IMR-90 (cell line): ENCODE measurements at regions of chr1 and their contacts with region 1.

Region 1: GRCh38 chr1:101238681-101239094 is 1.9 kb downstream of the S1PR1 start:
- DNase-seq: peak; percentile 91
- ATAC-seq: peak; percentile 69
- H3K4me3 ChIP-seq: no peak overlapping the region; the same call in 1 of the 2 replicates
- H3K27ac ChIP-seq: no peak overlapping the region
- H3K4me1 ChIP-seq: no peaks in the 10 kb centered on the region
- H3K27me3 ChIP-seq: no peaks in the 10 kb centered on the region
- CTCF ChIP-seq: peak; percentile 93
- POLR2A ChIP-seq: no peak
- RAD21 ChIP-seq: peak; percentile 90

Region 2: GRCh38 chr1:100921109-100921706 is 317.5 kb before region 1 on chr1:
- CTCF ChIA-PET with region 1: interaction called, 7 read pairs
- POLR2A ChIA-PET with region 1: no interaction called
- dilution Hi-C with region 1: no loop called
- in situ Hi-C with region 1: loop called (anchors 5 kb)
- intact Hi-C with region 1: loop called (anchors 1 kb)
- DNase-seq: peak; percentile 65
- ATAC-seq: peak; percentile 62
- H3K4me3 ChIP-seq: no peak overlapping the region
- H3K27ac ChIP-seq: no peak overlapping the region
- H3K4me1 ChIP-seq: no peaks in the 10 kb centered on the region
- H3K27me3 ChIP-seq: no peaks in the 10 kb centered on the region
- CTCF ChIP-seq: peak; percentile 71
- POLR2A ChIP-seq: no peak
- RAD21 ChIP-seq: peak; percentile 77

Region 3: GRCh38 chr1:101004670-101005069 is 234.0 kb before region 1 on chr1:
- CTCF ChIA-PET with region 1: no interaction called
- POLR2A ChIA-PET with region 1: no interaction called
- dilution Hi-C with region 1: no loop called
- in situ Hi-C with region 1: no loop called
- intact Hi-C with region 1: loop called (anchors 5 kb)
- DNase-seq: peak; percentile 64
- ATAC-seq: peak; percentile 28; the same call in 1 of the 2 replicates
- H3K4me3 ChIP-seq: no peak overlapping the region
- H3K27ac ChIP-seq: peak overlapping the region; percentile 49; the same call in 1 of the 2 replicates
- H3K4me1 ChIP-seq: peaks cover 10% of the 10 kb centered on the region; the same call in 1 of the 2 replicates
- H3K27me3 ChIP-seq: no peaks in the 10 kb centered on the region
- CTCF ChIP-seq: no peak
- POLR2A ChIP-seq: no peak
- RAD21 ChIP-seq: no peak

Region 4: DNA sequence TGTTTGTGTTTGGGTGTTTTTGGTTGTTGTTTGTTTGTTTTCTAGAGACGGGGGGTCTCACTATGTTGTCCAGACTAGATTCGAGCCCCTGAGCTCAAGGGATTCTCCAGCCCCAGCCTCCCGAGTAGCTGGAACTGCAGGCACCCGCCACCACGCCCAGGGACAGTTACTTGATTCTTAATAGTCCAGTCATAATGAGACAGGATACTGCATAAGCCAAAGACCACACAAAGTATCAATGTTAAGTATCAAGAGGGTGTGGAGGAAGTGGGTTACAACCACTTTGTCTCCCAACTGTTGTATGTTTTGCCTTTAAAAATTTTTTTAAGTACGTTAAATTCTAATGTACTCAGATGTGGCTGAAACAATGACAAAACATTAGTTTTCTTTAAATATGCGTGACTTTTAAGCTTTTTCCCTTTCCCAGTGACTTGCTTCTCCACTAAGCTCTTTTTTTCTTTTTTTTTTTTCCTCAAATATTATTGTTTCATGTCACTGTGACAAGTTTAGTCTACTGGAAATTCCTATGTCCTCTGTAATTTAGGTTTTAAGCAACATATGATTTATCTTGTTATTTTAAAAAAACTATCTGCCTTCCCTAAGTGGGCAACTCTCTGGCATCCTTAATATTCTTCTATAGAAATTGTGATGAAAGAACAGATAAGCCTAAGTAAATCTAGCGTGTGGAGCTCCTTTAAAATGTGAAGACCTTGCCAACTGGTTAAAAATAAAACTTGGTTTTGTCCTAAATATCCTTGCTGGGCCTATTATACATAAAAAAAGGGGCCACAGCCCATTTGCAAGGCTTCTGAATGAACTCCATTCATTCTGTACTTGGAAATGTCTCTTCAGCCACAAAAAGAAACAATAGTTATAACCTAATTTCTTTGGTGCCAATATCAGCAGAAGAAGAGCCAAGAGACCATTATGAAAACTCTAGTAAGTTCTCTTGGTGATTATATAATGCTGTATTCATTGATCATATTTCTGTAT is 156.9 kb before region 1 on chr1:
- CTCF ChIA-PET with region 1: no interaction called
- POLR2A ChIA-PET with region 1: no interaction called
- dilution Hi-C with region 1: no loop called
- in situ Hi-C with region 1: no loop called
- intact Hi-C with region 1: loop called (anchors 5 kb)
- DNase-seq: no peak
- ATAC-seq: no peak
- H3K4me3 ChIP-seq: no peak overlapping the region
- H3K27ac ChIP-seq: no peak overlapping the region
- H3K4me1 ChIP-seq: no peaks in the 10 kb centered on the region
- H3K27me3 ChIP-seq: no peaks in the 10 kb centered on the region
- CTCF ChIP-seq: no peak
- POLR2A ChIP-seq: no peak
- RAD21 ChIP-seq: no peak

Region 5: DNA sequence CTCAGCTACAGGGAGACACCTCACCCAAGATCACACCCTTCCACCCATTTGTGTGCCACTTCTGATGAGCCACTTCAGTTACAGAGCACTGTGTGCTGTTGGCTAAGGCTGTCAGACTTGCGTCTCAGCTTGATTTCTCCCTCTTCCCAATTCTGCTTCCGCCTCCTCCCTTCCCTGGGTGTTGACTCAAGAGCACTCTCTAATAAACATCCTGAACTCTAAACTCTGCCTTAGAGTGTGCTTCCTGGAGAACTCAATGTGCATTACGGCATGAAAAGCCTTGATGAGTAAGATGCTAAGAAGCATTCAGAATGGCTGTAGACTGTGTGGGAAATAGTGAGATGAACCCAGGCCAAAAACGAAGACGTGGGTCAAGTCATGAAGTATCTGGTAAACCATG is 56.8 kb before region 1 on chr1:
- CTCF ChIA-PET with region 1: no interaction called
- POLR2A ChIA-PET with region 1: no interaction called
- dilution Hi-C with region 1: no loop called
- in situ Hi-C with region 1: no loop called
- intact Hi-C with region 1: loop called (anchors 5 kb)
- DNase-seq: peak; percentile 75
- ATAC-seq: peak; percentile 70
- H3K4me3 ChIP-seq: no peak overlapping the region
- H3K27ac ChIP-seq: no peak overlapping the region
- H3K4me1 ChIP-seq: peaks cover 10% of the 10 kb centered on the region
- H3K27me3 ChIP-seq: no peaks in the 10 kb centered on the region
- CTCF ChIP-seq: no peak
- POLR2A ChIP-seq: no peak
- RAD21 ChIP-seq: no peak

Region 6: GRCh38 chr1:101203820-101204540 is 34.7 kb before region 1 on chr1:
- CTCF ChIA-PET with region 1: no interaction called
- POLR2A ChIA-PET with region 1: no interaction called
- dilution Hi-C with region 1: no loop called
- in situ Hi-C with region 1: no loop called
- intact Hi-C with region 1: no loop called
- DNase-seq: peak; percentile 70
- ATAC-seq: no peak
- H3K4me3 ChIP-seq: no peak overlapping the region
- H3K27ac ChIP-seq: no peak overlapping the region
- H3K4me1 ChIP-seq: peaks cover 4% of the 10 kb centered on the region
- H3K27me3 ChIP-seq: no peaks in the 10 kb centered on the region
- CTCF ChIP-seq: no peak
- POLR2A ChIP-seq: no peak
- RAD21 ChIP-seq: no peak

Region 7: DNA sequence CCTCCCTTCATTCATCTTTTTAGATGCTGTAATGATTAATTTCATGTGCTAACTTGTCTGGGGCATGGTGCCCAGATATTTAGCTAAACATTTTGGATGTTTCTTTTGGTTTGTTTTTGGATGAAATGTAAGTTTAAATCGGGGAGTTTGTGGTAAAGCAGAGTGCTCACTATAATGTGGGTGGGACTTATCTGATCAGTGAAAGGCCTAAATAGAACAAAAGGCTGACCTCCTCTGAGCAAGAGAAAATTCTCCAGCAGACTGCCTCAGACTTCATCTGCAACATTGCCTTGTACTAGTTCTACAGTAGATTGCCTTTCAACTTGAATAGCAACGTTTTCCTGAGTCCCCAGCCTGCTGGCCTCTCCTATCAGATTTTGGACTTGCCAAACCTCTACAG is 181.7 kb after region 1 on chr1:
- CTCF ChIA-PET with region 1: no interaction called
- POLR2A ChIA-PET with region 1: no interaction called
- dilution Hi-C with region 1: no loop called
- in situ Hi-C with region 1: no loop called
- intact Hi-C with region 1: no loop called
- DNase-seq: no peak
- ATAC-seq: no peak
- H3K4me3 ChIP-seq: no peak overlapping the region
- H3K27ac ChIP-seq: no peak overlapping the region
- H3K4me1 ChIP-seq: no peaks in the 10 kb centered on the region
- H3K27me3 ChIP-seq: no peaks in the 10 kb centered on the region
- CTCF ChIP-seq: no peak
- POLR2A ChIP-seq: no peak
- RAD21 ChIP-seq: no peak